ENCODE measurements at regions of chr2 and their contacts with region 1.

Region 1: DNA sequence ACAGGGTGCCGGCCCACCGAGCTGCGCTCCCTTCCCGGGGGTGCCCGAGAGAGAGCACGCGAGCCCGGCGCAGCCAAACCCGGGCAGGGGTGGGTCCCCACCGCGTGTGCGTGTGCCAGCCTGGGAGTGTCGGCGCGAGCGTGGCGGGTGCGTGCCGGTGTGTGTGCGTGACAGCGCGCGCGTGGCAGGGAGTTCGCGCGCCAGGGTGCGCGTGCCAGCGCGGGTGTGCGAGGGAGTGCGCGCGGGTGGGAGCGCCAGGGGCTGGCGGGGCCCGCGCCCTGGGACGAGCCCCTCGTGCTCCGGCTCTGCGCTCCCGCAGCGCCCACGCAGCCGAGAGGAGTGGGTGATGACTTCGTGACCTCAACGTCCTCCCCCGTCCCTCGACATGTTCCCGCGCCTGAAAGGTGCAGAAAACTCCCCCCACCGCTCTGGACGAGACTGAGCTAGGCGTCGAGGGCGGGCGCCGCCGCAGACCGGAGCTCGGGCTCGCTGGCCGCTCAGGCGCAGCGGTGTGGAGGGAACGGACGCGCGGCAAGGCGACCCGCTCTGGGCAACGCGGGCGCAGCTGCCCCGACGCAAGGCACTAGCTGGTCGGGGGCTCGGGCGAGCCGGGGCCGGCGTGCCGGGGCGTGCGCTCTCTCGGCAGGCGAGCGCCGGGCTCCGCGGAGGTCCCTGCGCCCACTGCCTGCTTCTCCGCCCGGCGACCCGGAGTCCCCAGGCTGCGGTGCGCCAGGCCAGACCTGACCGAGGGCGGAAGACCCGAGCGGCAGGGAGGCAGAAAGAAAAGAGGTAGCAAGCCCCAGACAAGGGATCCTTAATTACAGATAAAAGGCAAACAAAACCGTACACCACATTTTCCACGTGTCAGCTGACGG is 582.8 kb downstream of the ZEB2 start:
- DNase-seq: no peak
- ATAC-seq: peak; percentile 87
- H3K4me3 ChIP-seq: peak overlapping the region; percentile 34
- H3K27ac ChIP-seq: no peak overlapping the region
- H3K4me1 ChIP-seq: no peaks in the 10 kb centered on the region
- H3K27me3 ChIP-seq: peaks cover 0 to 14% of the 10 kb centered on the region in 2 experiments
- CTCF ChIP-seq: no peak
- EP300 ChIP-seq: no peak
- POLR2A ChIP-seq: no peak
- RAD21 ChIP-seq: no peak

Region 2: DNA sequence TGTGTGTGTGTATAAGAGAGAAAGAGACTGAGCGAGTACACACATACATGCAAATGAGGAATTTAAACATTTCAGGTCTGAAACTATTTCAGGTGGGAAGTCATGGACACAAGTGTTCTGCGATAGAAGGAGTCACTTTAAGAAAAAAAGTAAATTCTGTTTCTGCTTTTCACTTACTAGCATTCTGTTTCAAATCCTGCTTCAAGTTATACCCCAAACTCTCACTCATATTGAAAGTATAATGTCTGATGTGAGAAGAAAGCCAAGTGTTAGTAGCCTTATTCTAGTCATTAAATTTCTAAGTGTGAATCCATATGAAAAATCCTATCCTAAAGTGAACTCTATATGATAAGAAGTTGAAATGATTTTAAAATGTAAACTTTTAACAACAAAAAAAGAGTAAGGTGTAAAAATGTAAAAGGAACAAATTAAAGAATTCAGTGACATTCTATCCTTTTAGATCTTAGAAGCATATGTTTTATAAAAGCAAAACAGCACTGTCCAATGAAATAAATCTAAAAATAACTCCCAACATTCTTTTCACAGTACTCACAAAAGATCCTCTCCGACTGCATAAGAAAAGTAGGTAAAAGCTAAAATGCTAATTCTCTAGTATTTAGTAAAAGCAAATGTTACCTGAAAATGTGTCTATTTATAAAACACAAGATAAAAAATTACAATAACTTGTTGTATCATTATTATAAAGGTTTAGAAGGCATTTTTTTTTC is 12.2 kb after region 1 on chr2:
- CTCF ChIA-PET with region 1: interaction called, 18 read pairs
- POLR2A ChIA-PET with region 1: interaction called, 4 read pairs
- RAD21 ChIA-PET with region 1: interaction called, 8 read pairs
- SMC1A ChIA-PET with region 1: interaction called, 17 read pairs
- in situ Hi-C with region 1: no loop called
- intact Hi-C with region 1: no loop called
- DNase-seq: no peak
- ATAC-seq: peak; percentile 56; the same call in 2 of the 3 replicates
- H3K4me3 ChIP-seq: no peak overlapping the region
- H3K27ac ChIP-seq: no peak overlapping the region
- H3K4me1 ChIP-seq: no peaks in the 10 kb centered on the region
- H3K27me3 ChIP-seq: no peaks in the 10 kb centered on the region
- CTCF ChIP-seq: no peak
- EP300 ChIP-seq: no peak
- POLR2A ChIP-seq: no peak
- RAD21 ChIP-seq: no peak

Region 3: GRCh38 chr2:144650907-144651306 is 713.8 kb after region 1 on chr2:
- CTCF ChIA-PET with region 1: no interaction called
- POLR2A ChIA-PET with region 1: no interaction called
- RAD21 ChIA-PET with region 1: no interaction called
- SMC1A ChIA-PET with region 1: no interaction called
- in situ Hi-C with region 1: no loop called
- intact Hi-C with region 1: no loop called
- DNase-seq: no peak
- ATAC-seq: no peak
- H3K4me3 ChIP-seq: no peak overlapping the region
- H3K27ac ChIP-seq: no peak overlapping the region
- H3K4me1 ChIP-seq: no peaks in the 10 kb centered on the region
- H3K27me3 ChIP-seq: no peaks in the 10 kb centered on the region
- CTCF ChIP-seq: no peak
- EP300 ChIP-seq: no peak
- POLR2A ChIP-seq: no peak
- RAD21 ChIP-seq: no peak